ENCODE measurements at regions of chr9 and their contacts with region 1.

Region 1: DNA sequence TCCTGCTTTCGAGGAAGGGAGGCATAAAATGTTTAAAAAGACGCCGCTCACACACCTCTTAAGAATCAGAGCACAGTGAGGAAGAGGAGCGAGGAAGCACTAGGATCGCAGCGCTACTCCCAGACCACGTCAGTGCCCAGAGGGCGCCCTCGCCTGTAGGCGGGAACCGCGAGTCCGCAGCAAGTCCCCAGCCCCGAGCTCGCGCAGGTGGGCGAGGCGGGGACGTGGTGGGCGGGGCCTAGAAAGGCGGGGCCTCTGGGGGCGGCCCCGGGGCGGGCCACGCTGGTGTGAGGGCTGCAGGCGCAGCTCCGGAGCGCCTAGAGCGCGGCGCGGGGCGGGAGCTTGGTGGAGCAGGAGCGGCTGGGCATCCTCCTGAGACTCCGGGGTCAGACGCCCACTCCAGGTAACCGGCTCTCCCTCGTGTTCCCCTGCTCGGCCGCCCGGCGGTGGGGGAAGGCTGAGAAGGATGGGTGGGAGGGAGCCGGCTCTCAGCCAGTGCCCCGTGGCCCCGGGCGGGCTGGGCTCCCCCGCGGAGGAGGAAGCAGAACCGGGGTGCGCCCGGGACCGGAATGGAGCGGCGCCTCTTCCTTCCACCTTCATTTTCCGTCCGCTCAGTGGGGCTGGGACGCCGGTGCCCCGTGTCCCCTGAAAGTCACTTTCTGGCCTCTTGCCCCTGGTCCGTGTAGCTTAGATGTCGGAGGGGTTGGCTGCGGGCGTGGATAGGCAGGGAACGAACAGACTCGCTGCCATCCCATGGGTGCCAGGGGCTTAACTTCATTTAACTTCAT is at the start of gene GCNT1:
- DNase-seq: peak; percentile 77 to 93 (median 90)
- ATAC-seq: peak; percentile 95
- H3K4me3 ChIP-seq: peak within 1 kb of the TSS; percentile 69 to 89
- H3K4me3 Mint-ChIP-seq: peak within 1 kb of the TSS; percentile 94
- H3K27ac ChIP-seq: peak within 1 kb of the TSS in 1 of 2 experiments; percentile 31
- H3K27ac Mint-ChIP-seq: peak within 1 kb of the TSS; percentile 72
- H3K4me1 ChIP-seq: peaks cover 11% of the 10 kb centered on the region
- H3K4me1 Mint-ChIP-seq: peaks cover 19% of the 10 kb centered on the region
- H3K27me3 ChIP-seq: no peaks in the 10 kb centered on the region
- H3K27me3 Mint-ChIP-seq: no peaks in the 10 kb centered on the region
- CTCF ChIP-seq: no peak
- total RNA-seq, gene GCNT1: 0.35 to 0.47 TPM

Region 2: DNA sequence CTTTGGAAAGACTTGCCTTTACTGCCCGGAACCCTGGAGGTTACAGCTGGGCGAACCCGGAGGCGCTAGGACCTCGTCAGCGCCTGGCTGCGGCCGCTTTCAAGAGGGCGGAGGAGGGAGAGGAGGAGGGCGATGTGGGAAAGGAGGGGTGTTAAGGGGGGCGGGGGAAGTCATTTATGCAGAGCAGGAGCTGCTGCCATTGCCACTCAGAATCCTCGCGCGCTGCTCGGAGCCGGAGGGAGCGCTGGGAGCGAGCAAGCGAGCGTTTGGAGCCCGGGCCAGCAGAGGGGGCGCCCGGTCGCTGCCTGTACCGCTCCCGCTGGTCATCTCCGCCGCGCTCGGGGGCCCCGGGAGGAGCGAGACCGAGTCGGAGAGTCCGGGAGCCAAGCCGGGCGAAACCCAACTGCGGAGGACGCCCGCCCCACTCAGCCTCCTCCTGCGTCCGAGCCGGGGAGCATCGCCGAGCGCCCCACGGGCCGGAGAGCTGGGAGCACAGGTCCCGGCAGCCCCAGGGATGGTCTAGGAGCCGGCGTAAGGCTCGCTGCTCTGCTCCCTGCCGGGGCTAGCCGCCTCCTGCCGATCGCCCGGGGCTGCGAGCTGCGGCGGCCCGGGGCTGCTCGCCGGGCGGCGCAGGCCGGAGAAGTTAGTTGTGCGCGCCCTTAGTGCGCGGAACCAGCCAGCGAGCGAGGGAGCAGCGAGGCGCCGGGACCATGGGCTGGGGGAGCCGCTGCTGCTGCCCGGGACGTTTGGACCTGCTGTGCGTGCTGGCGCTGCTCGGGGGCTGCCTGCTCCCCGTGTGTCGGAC is 568.4 kb before region 1 on chr9 and contains the start of gene PCSK5:
- CTCF ChIA-PET with region 1: no interaction called
- POLR2A ChIA-PET with region 1: no interaction called
- intact Hi-C with region 1: loop called in 1 of 2 experiments (anchors 5 kb)
- DNase-seq: peak; percentile 66 to 92 (median 85)
- ATAC-seq: peak; percentile 90
- H3K4me3 ChIP-seq: peak within 1 kb of the TSS; percentile 81 to 82
- H3K4me3 Mint-ChIP-seq: peak within 1 kb of the TSS; percentile 92
- H3K27ac ChIP-seq: peak within 1 kb of the TSS; percentile 60 to 70
- H3K27ac Mint-ChIP-seq: peak within 1 kb of the TSS; percentile 85
- H3K4me1 ChIP-seq: peaks cover 16% of the 10 kb centered on the region
- H3K4me1 Mint-ChIP-seq: peaks cover 54% of the 10 kb centered on the region
- H3K27me3 ChIP-seq: peaks cover 0 to 6% of the 10 kb centered on the region in 2 experiments
- H3K27me3 Mint-ChIP-seq: no peaks in the 10 kb centered on the region
- CTCF ChIP-seq: no peak
- total RNA-seq, gene PCSK5: 13.7 to 13.8 TPM

Region 3: DNA sequence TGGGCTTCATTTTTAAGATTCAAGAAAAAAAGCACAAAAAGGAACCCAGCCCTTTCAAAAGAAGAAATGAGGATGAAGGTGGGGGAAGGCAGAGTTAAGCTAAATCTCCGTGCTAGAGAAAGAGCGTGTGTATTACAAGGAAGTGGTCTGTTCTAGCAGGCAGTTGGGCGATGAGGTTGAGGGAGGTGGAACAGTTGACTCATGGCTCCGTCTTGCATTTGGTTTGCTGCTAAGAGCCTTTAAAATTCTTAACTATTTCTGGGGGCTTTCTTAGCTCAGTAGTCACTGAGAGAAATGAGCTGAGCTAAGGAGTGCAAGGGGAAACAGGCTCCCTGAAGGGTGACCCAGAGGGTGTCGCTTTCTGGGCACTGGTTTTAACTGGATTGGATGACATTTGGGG is 117.2 kb after region 1 on chr9:
- CTCF ChIA-PET with region 1: no interaction called
- POLR2A ChIA-PET with region 1: interaction called, 3 read pairs
- intact Hi-C with region 1: loop called in 1 of 2 experiments (anchors 1 kb)
- DNase-seq: peak; percentile 10 to 89 (median 64)
- ATAC-seq: peak; percentile 76
- H3K4me3 ChIP-seq: no peak overlapping the region
- H3K4me3 Mint-ChIP-seq: peak overlapping the region; percentile 3
- H3K27ac ChIP-seq: peak overlapping the region in 1 of 2 experiments; percentile 42
- H3K27ac Mint-ChIP-seq: peak overlapping the region; percentile 12
- H3K4me1 ChIP-seq: peaks cover 3% of the 10 kb centered on the region
- H3K4me1 Mint-ChIP-seq: peaks cover 25% of the 10 kb centered on the region
- H3K27me3 ChIP-seq: no peaks in the 10 kb centered on the region
- H3K27me3 Mint-ChIP-seq: peaks cover 28% of the 10 kb centered on the region
- CTCF ChIP-seq: no peak

Region 4: GRCh38 chr9:77177161-77177893 is 718.2 kb after region 1 on chr9 and contains the start of gene VPS13A:
- CTCF ChIA-PET with region 1: no interaction called
- POLR2A ChIA-PET with region 1: no interaction called
- intact Hi-C with region 1: loop called in 1 of 2 experiments (anchors 1 kb)
- DNase-seq: peak; percentile 74 to 96 (median 91)
- ATAC-seq: peak; percentile 81
- H3K4me3 ChIP-seq: peak within 1 kb of the TSS; percentile 74 to 92
- H3K4me3 Mint-ChIP-seq: peak within 1 kb of the TSS; percentile 92
- H3K27ac ChIP-seq: peak within 1 kb of the TSS; percentile 72 to 82
- H3K27ac Mint-ChIP-seq: peak within 1 kb of the TSS; percentile 93
- H3K4me1 ChIP-seq: peaks cover 11% of the 10 kb centered on the region
- H3K4me1 Mint-ChIP-seq: peaks cover 40% of the 10 kb centered on the region
- H3K27me3 ChIP-seq: no peaks in the 10 kb centered on the region
- H3K27me3 Mint-ChIP-seq: no peaks in the 10 kb centered on the region
- CTCF ChIP-seq: no peak
- total RNA-seq, gene VPS13A: 35.5 to 37.4 TPM

Measured in CD8-positive, alpha-beta T cell (primary cell).